Naive thymus-derived CD8-positive, alpha-beta T cell (primary cell): ENCODE measurements at regions of chr11 and their contacts with region 1.

Region 1: DNA sequence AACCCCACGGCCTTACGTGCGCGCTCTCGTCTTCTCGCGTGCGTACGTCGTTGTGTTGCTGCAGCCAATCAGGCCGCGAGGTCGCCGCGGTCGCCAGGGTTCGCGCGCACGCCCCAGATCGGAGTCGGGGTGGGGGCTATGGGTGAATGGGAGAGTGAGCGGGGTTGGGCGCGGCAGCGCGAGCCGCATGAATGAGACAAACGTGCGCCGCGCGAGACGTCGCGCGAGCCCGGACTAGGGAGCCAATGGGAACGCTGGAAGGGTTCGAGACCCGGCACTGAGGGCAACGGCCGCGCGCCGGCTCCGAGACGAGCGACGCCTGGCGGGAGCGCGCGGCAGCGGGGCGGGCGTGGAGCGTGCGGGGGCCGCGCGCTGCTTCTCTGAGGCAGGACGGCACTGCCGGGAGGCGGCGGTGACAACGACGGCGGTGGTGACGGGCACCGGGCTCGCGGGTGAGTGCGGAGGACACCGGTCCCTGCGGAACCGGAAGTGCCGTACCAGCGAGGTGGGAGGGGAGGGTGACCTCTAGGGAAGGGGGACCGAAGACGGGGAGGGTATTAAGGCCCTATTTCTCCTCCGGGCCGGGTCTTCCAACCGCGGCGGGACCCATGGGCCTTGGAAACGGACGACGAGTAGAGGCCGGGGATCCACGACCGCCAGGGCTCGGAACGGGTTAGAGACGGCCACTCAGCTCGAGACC is at the start of gene ZDHHC5:
- DNase-seq: peak in 9 of 10 donors; percentile 98 to 100 (median 100)
- ATAC-seq: peak; percentile 85 to 88
- H3K4me3 Mint-ChIP-seq: peak within 1 kb of the TSS; percentile 88 to 97 (median 92)
- H3K27ac Mint-ChIP-seq: peak within 1 kb of the TSS; percentile 98 to 100 (median 99)
- H3K4me1 Mint-ChIP-seq: peaks cover 33 to 54% (median 52%) of the 10 kb centered on the region in 4 donors
- H3K27me3 Mint-ChIP-seq: no peaks in the 10 kb centered on the region
- polyA plus RNA-seq, gene ZDHHC5: 25.0 to 43.4 (median 26.4) TPM

Region 2: DNA sequence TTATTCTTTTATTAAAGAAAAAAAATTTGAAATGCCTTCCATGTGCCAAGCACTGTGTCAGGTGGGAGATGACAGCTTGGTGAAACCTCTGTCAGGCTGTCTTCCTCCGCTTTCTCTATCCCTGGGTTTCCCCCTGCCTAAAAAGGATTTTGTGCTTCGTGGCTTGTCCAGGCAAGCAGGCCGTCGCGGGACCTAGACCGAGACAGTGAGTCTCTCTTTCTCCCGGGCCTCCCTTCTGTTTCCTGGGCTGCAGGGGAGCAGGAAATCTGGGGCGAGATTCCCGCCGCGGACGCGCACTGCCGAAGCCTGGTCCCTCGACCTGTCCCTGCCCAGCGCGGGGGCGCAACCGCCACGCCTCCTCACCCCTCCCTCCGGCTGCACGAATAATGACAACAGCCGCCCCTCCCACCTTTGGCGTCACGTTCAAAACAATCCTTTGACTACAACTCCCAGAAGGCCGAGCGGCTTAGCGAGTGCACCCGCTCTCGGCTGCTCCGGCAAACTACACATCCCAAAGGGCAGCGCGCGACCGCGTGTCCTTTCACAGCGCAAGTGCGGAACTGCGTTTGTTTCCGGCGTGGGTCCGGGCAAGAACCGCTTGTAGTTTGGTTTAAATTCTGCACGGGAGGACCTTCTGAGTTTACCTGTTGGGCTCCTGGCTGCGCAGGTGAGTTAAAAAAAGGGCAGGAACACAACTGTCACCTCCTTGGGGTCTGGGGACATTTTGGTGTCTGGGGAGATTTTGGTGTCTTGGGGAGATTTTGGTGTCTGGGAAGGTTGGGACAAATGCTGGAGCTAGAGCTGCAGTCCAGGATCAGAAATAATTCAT is 10.5 kb before region 1 on chr11 and contains the start of gene CLP1:
- POLR2A ChIA-PET with region 1: interaction called, 27 read pairs
- DNase-seq: peak; percentile 94 to 99 (median 98)
- ATAC-seq: peak; percentile 95
- H3K4me3 Mint-ChIP-seq: peak within 1 kb of the TSS; percentile 90 to 100 (median 98)
- H3K27ac Mint-ChIP-seq: peak within 1 kb of the TSS; percentile 94 to 99 (median 96)
- H3K4me1 Mint-ChIP-seq: peaks cover 17 to 49% (median 37%) of the 10 kb centered on the region in 4 donors
- H3K27me3 Mint-ChIP-seq: no peaks in the 10 kb centered on the region
- polyA plus RNA-seq, gene CLP1: 7.9 to 13.4 (median 9.4) TPM

Region 3: GRCh38 chr11:57680552-57680874 is 12.6 kb after region 1 on chr11:
- POLR2A ChIA-PET with region 1: no interaction called
- DNase-seq: no peak
- ATAC-seq: no peak
- H3K4me3 Mint-ChIP-seq: peak overlapping the region in 2 of 10 donors; percentile 9 to 38
- H3K27ac Mint-ChIP-seq: peak overlapping the region in 6 of 10 donors; percentile 31 to 80 (median 40)
- H3K4me1 Mint-ChIP-seq: peaks cover 26 to 68% (median 52%) of the 10 kb centered on the region in 4 donors
- H3K27me3 Mint-ChIP-seq: no peaks in the 10 kb centered on the region